CD8-positive, alpha-beta memory T cell (primary cell): ENCODE measurements at regions of chr15 and their contacts with region 1.

Region 1: DNA sequence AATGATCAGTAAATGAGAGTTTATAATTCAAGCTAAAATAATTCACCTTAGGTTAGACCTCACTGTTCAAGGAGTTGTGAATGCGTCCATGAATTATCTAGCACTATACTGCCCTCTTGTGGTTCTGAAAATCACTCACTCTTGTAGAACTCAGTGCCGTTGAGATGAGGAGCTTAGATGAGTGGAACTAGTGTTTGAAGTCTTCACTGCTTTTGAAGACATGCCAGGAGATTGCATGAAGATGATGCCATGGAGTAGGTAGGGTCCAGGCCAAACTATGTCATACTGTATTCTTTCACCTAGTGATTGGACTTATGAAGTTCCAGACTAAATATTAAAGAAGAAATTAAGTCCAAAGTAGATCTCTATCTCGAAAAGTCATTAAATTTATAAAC is 28.8 kb downstream of the LYSMD4 start:
- DNase-seq: peak in 2 of 5 donors; percentile 61 to 68
- H3K4me3 ChIP-seq: no peak overlapping the region
- H3K4me3 Mint-ChIP-seq: no peak overlapping the region
- H3K27ac ChIP-seq: no peak overlapping the region
- H3K27ac Mint-ChIP-seq: no peak overlapping the region
- H3K4me1 ChIP-seq: peaks cover 19% of the 10 kb centered on the region
- H3K4me1 Mint-ChIP-seq: peaks cover 27 to 34% (median 32%) of the 10 kb centered on the region in 3 donors
- H3K27me3 ChIP-seq: no peaks in the 10 kb centered on the region
- H3K27me3 Mint-ChIP-seq: no peaks in the 10 kb centered on the region

Region 2: DNA sequence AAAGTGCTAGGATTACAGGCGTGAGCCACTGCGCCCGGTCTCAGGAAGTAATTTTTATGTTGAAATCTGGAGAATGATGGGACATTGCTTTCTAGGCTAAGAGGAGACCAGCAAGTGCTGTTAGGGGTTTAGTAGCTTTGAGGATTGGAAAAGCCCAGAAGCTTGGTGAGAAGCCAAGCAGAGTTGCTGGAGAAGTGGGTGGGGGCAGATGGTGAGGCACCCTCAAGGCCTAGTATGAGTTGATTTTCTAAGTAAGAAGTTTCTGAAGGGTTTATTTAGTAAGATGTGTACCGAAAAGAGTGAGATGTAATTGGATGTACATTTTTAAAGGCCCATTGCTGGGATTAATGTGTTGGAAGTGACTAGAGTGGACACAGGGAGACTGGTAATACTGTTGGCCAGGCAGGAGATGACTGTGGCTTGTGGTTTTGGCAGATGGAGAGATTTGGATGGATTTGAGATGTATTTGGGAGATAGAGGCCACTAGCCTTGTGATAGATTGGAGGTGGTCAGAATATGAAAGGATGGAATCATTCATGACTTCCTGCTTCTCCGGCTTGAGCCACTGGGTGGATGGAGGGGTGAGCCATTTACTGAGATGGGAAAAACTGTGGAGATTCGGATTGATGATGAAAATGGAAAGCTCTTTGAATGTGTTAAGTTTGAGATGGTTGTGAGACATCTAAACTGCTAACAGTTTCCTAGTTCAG is 450.9 kb before region 1 on chr15:
- CTCF ChIA-PET with region 1: interaction called, 12 read pairs
- POLR2A ChIA-PET with region 1: no interaction called
- DNase-seq: no peak
- H3K4me3 ChIP-seq: no peak overlapping the region
- H3K4me3 Mint-ChIP-seq: peak overlapping the region in 3 of 7 donors; percentile 20 to 57 (median 28)
- H3K27ac ChIP-seq: no peak overlapping the region
- H3K27ac Mint-ChIP-seq: peak overlapping the region in 3 of 8 donors; percentile 4 to 51 (median 26)
- H3K4me1 ChIP-seq: peaks cover 31% of the 10 kb centered on the region
- H3K4me1 Mint-ChIP-seq: peaks cover 28 to 31% (median 30%) of the 10 kb centered on the region in 3 donors
- H3K27me3 ChIP-seq: no peaks in the 10 kb centered on the region
- H3K27me3 Mint-ChIP-seq: no peaks in the 10 kb centered on the region

Region 3: GRCh38 chr15:99282121-99282520 is 422.3 kb before region 1 on chr15:
- CTCF ChIA-PET with region 1: interaction called, 13 read pairs
- POLR2A ChIA-PET with region 1: no interaction called
- DNase-seq: no peak
- H3K4me3 ChIP-seq: no peak overlapping the region
- H3K4me3 Mint-ChIP-seq: no peak overlapping the region
- H3K27ac ChIP-seq: no peak overlapping the region
- H3K27ac Mint-ChIP-seq: no peak overlapping the region
- H3K4me1 ChIP-seq: no peaks in the 10 kb centered on the region
- H3K4me1 Mint-ChIP-seq: peaks cover 12 to 21% (median 20%) of the 10 kb centered on the region in 3 donors
- H3K27me3 ChIP-seq: no peaks in the 10 kb centered on the region
- H3K27me3 Mint-ChIP-seq: no peaks in the 10 kb centered on the region

Region 4: GRCh38 chr15:99565299-99566156 is 138.9 kb before region 1 on chr15 and contains the start of gene MEF2A:
- CTCF ChIA-PET with region 1: interaction called, 11 read pairs
- POLR2A ChIA-PET with region 1: no interaction called
- DNase-seq: peak; percentile 83 to 95 (median 90)
- H3K4me3 ChIP-seq: peak within 1 kb of the TSS; percentile 100
- H3K4me3 Mint-ChIP-seq: peak within 1 kb of the TSS; percentile 93 to 98 (median 97)
- H3K27ac ChIP-seq: peak within 1 kb of the TSS; percentile 89
- H3K27ac Mint-ChIP-seq: peak within 1 kb of the TSS; percentile 92 to 100 (median 96)
- H3K4me1 ChIP-seq: peaks cover 30% of the 10 kb centered on the region
- H3K4me1 Mint-ChIP-seq: peaks cover 24 to 37% (median 34%) of the 10 kb centered on the region in 3 donors
- H3K27me3 ChIP-seq: no peaks in the 10 kb centered on the region
- H3K27me3 Mint-ChIP-seq: peaks cover 0 to 3% of the 10 kb centered on the region in 2 donors
- total RNA-seq, gene MEF2A: 21.1 to 22.4 TPM

Region 5: GRCh38 chr15:99755692-99756409 is 51.4 kb after region 1 on chr15:
- CTCF ChIA-PET with region 1: interaction called, 28 read pairs
- POLR2A ChIA-PET with region 1: no interaction called
- DNase-seq: peak in 3 of 5 donors; percentile 42 to 59 (median 47)
- H3K4me3 ChIP-seq: no peak overlapping the region
- H3K4me3 Mint-ChIP-seq: no peak overlapping the region
- H3K27ac ChIP-seq: no peak overlapping the region
- H3K27ac Mint-ChIP-seq: no peak overlapping the region
- H3K4me1 ChIP-seq: peaks cover 4% of the 10 kb centered on the region
- H3K4me1 Mint-ChIP-seq: peaks cover 0 to 6% (median 3%) of the 10 kb centered on the region in 3 donors
- H3K27me3 ChIP-seq: no peaks in the 10 kb centered on the region
- H3K27me3 Mint-ChIP-seq: peaks cover 0 to 4% of the 10 kb centered on the region in 2 donors

Region 6: DNA sequence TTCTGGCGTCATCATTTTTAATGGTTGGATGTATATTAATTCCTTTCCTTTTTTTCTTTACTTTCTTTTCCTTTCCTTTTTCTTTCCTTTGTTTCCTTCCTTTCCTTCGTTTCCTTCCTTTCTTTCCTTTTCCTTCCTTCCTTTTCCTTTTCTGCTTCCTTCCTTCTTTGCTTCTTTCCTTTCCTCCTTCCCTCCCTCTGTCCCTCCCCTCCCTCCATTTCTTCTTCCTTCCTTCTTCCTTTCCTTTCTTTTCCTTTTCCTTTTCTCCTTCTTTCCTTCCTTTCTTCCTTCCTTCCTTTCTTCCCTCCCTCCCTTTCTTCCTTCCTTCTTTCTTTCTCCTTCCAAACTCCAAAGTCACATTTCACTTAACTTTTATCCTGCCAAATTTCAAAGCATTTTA is 83.7 kb after region 1 on chr15:
- CTCF ChIA-PET with region 1: no interaction called
- POLR2A ChIA-PET with region 1: no interaction called
- DNase-seq: no peak
- H3K4me3 ChIP-seq: no peak overlapping the region
- H3K4me3 Mint-ChIP-seq: no peak overlapping the region
- H3K27ac ChIP-seq: no peak overlapping the region
- H3K27ac Mint-ChIP-seq: peak overlapping the region in 2 of 8 donors; percentile 43 to 45
- H3K4me1 ChIP-seq: no peaks in the 10 kb centered on the region
- H3K4me1 Mint-ChIP-seq: no peaks in the 10 kb centered on the region
- H3K27me3 ChIP-seq: no peaks in the 10 kb centered on the region
- H3K27me3 Mint-ChIP-seq: peaks cover 0 to 5% of the 10 kb centered on the region in 2 donors

Region 7: GRCh38 chr15:100537331-100537730 is 832.9 kb after region 1 on chr15:
- CTCF ChIA-PET with region 1: no interaction called
- POLR2A ChIA-PET with region 1: no interaction called
- DNase-seq: no peak
- H3K4me3 ChIP-seq: no peak overlapping the region
- H3K4me3 Mint-ChIP-seq: no peak overlapping the region
- H3K27ac ChIP-seq: no peak overlapping the region
- H3K27ac Mint-ChIP-seq: no peak overlapping the region
- H3K4me1 ChIP-seq: no peaks in the 10 kb centered on the region
- H3K4me1 Mint-ChIP-seq: no peaks in the 10 kb centered on the region
- H3K27me3 ChIP-seq: no peaks in the 10 kb centered on the region
- H3K27me3 Mint-ChIP-seq: peaks cover 9 to 11% of the 10 kb centered on the region in 2 donors